ENCODE measurements at regions of chr3 and their contacts with region 1.

Region 1: GRCh38 chr3:98522244-98523090 is at the start of gene CLDND1:
- DNase-seq: peak; percentile 95
- H3K4me3 Mint-ChIP-seq: peak within 1 kb of the TSS; percentile 97
- H3K27ac Mint-ChIP-seq: peak within 1 kb of the TSS; percentile 95
- H3K4me1 Mint-ChIP-seq: peaks cover 77% of the 10 kb centered on the region
- H3K27me3 Mint-ChIP-seq: no peaks in the 10 kb centered on the region
- total RNA-seq, gene CLDND1: 314 and 328 TPM in 2 replicates

Region 2: GRCh38 chr3:97764407-97765238 is 757.8 kb before region 1 on chr3 and contains the start of gene ARL6:
- intact Hi-C with region 1: loop called (anchors 1 kb)
- DNase-seq: peak; percentile 66
- H3K4me3 Mint-ChIP-seq: peak within 1 kb of the TSS; percentile 96
- H3K27ac Mint-ChIP-seq: peak within 1 kb of the TSS; percentile 95
- H3K4me1 Mint-ChIP-seq: peaks cover 31% of the 10 kb centered on the region
- H3K27me3 Mint-ChIP-seq: peaks cover 3% of the 10 kb centered on the region
- total RNA-seq, gene ARL6: 5.9 and 6.2 TPM in 2 replicates

Region 3: DNA sequence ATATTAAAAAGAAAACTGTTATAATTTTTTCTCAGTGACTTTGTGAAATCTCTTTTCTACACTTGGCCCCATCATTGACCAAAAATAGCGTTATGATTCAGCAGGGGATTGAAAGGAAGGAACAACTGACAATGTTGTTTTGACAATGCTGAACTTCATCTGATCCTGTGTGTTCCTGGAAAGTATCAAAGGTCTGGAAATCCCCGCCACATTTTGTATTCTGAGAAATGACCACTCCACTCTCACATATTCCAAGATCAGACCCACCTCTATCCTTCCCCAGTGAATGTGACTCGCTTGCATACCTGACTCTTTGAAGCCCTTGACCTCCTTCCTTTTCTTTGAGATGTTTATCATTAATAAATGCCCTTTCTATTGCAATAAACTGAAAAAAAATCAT is 540.6 kb before region 1 on chr3:
- intact Hi-C with region 1: loop called (anchors 1 kb)
- DNase-seq: peak; percentile 43
- H3K4me3 Mint-ChIP-seq: peak overlapping the region; percentile 9
- H3K27ac Mint-ChIP-seq: peak overlapping the region; percentile 89
- H3K4me1 Mint-ChIP-seq: peaks cover 49% of the 10 kb centered on the region
- H3K27me3 Mint-ChIP-seq: no peaks in the 10 kb centered on the region

Region 4: DNA sequence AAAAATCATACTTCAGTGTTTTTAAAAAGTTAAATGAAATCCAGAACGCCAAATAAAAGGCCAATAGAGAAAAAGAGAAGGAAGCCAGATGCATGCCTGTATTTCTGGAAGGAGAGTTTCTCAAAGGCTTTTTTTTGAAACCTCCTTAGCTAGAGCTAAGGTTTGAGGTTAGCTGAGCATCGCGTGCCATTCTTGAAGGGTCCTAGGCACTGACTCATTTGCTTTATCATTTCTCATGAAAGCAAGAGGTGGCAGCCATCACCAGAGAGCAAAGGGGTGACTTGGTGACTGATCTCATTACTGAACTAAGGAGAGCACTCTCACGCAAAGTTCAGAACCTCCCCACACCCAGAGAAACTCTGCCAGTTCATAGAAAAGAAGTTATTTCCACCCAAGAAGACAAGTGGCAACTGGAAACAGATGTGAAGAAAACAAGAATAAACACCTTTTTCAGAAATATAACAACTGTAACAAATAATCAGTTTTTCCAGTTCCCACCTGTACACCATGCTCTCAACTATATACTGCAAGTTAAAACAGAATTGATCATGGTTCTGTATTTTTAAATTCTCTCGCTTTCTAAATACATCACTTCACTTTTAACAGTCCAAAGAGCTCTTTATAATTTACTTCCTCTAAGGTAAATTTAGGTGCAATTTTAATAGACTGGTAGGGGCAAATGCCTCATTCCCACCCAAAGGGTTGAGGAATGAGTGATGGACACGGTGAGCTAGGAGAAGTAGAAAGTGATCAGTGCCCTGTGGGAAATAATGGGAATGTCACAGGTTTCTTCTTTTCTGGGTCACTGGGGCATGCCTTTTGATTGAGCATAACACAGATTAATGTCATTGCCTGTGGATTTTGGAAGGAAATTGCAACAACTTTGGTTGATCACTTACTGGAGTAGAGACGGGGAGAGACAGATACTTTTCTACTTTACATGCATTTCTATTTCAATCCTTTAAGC is 34.0 kb after region 1 on chr3:
- intact Hi-C with region 1: loop called (anchors 1 kb)
- DNase-seq: peak; percentile 81
- H3K4me3 Mint-ChIP-seq: peak overlapping the region; percentile 83
- H3K27ac Mint-ChIP-seq: peak overlapping the region; percentile 98
- H3K4me1 Mint-ChIP-seq: peaks cover 94% of the 10 kb centered on the region
- H3K27me3 Mint-ChIP-seq: no peaks in the 10 kb centered on the region

Region 5: GRCh38 chr3:98573181-98573728 is 50.8 kb after region 1 on chr3:
- intact Hi-C with region 1: loop called (anchors 1 kb)
- DNase-seq: no peak
- H3K4me3 Mint-ChIP-seq: peak overlapping the region; percentile 46
- H3K27ac Mint-ChIP-seq: peak overlapping the region; percentile 61
- H3K4me1 Mint-ChIP-seq: peaks cover 64% of the 10 kb centered on the region
- H3K27me3 Mint-ChIP-seq: no peaks in the 10 kb centered on the region

Region 6: DNA sequence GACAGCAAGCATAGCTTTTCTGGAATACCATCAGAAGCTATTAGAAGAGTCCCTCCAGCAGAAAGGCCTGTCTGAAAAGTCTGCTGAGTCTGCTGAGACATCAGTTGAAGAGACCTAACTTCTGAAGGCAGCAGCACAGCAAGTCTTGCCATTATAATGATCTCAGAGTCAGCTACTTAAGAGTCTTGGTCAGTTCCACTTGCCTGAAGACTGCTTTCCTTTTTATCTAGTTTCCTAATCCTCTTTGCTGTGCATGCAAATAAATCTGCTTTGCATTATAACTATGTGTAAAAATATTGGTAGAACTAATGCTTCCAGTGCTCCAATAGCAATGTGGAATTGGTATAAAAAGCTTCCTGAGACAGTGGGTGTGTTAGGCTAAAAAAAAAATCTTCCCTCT is 105.8 kb after region 1 on chr3:
- intact Hi-C with region 1: no loop called
- DNase-seq: no peak
- H3K4me3 Mint-ChIP-seq: no peak overlapping the region
- H3K27ac Mint-ChIP-seq: no peak overlapping the region
- H3K4me1 Mint-ChIP-seq: no peaks in the 10 kb centered on the region
- H3K27me3 Mint-ChIP-seq: no peaks in the 10 kb centered on the region

Region 7: GRCh38 chr3:98732286-98733052 is 210.0 kb after region 1 on chr3:
- intact Hi-C with region 1: loop called (anchors 5 kb)
- DNase-seq: no peak
- H3K4me3 Mint-ChIP-seq: peak overlapping the region; percentile 65
- H3K27ac Mint-ChIP-seq: no peak overlapping the region
- H3K4me1 Mint-ChIP-seq: peaks cover 13% of the 10 kb centered on the region
- H3K27me3 Mint-ChIP-seq: peaks cover 53% of the 10 kb centered on the region

Region 8: DNA sequence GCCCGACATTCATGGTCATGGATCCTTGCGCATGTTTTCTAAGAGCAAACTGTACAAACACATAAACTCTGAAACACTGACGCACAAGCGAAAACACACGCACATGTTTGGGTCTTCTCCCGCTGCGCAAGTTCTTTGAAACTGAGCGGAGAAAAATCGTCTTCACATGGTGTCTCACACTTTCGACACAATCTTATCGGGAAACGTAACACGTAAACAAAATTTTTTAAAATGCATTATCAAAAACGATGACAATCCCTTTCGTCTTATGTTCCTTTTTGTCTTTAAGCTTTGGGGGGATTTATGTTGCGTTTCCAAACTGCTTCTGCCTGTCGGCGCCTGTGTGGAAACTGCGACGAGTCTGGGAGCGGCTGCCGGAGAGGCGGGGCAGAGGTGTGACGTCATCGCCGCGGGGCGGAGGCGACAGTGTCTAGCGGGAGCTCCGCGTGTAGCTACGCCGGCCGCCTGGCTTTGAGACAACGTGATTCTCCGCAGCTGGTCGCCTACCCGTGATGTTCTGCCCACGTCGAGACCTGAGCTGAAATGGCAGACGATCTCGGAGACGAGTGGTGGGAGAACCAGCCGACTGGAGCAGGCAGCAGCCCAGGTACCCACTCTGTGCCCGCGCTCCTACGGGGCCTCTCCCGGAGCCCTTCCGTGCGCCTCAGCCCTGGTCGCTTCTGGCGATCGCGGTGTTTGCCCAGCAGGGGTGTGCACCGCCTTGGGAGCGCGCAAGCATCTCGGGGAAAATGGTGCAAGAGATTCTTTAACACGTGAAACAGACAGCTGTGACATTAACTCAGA is 1295.2 kb after region 1 on chr3 and contains the start of gene CMSS1:
- intact Hi-C with region 1: loop called (anchors 5 kb)
- DNase-seq: peak; percentile 92
- H3K4me3 Mint-ChIP-seq: peak within 1 kb of the TSS; percentile 88
- H3K27ac Mint-ChIP-seq: peak within 1 kb of the TSS; percentile 90
- H3K4me1 Mint-ChIP-seq: peaks cover 35% of the 10 kb centered on the region
- H3K27me3 Mint-ChIP-seq: no peaks in the 10 kb centered on the region
- total RNA-seq, gene CMSS1: 108 and 121 TPM in 2 replicates

Measured in activated T-helper 1 cell treated with anti-CD3 and anti-CD28 coated beads, Interleukin-12 subunit alpha, Interleukin-12 subunit beta, Interleukin-2, Interleukin-4 antibody, amounts not matched to agents 30 ng/mL and 10 ng/mL and 1 ng/mL, durations not matched to agents 14 hours and 24 hours and 36 hours (primary cell).